ENCODE measurements at regions of chr2 and their contacts with region 1.

Region 1: DNA sequence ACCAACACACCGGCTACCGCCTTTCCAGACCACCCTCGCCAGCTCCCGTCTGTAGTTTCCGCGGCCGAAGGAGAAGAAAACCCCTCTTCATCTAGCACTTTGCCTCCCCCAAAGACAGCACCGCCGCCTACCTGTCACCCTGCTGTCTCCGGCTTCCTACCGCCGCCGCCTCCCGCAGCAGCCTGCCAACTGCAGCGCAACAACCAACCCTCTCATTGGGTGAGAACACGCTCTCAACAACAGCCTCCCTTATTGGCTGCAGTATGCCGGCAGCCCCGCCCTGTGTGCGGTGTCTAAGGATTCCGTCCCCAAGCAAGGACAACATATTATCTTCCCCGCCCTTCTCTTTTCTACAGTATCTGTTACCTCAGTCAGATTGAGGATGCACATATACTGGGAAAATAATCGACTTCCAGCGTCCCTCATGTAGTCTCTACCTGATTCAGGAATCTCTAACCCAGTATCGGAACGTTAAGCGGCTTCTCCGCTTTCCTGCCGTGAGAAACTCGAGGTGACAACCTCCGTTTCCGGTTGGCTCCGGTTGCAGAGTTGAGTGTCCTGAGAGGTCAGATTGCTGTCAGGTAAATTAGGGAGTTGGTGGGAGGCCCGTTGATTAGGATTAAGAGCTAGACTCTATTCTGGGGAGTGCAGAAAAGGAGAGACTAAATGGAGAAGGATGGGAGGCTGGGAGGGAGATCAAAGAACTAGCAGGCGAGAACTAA is at the starts of genes HYCC2 and NDUFB3:
- DNase-seq: peak; percentile 97
- H3K4me3 ChIP-seq: peak within 1 kb of the TSS; percentile 88 to 98
- H3K27ac ChIP-seq: peak within 1 kb of the TSS; percentile 86 to 95
- H3K4me1 ChIP-seq: peaks cover 7 to 12% of the 10 kb centered on the region in 2 experiments; a peak in 3 of 4 replicates
- H3K27me3 ChIP-seq: no peaks in the 10 kb centered on the region
- CTCF ChIP-seq: peak; percentile 34
- EP300 ChIP-seq: no peak
- RAD21 ChIP-seq: peak; percentile 29; the same call in 1 of the 2 replicates
- polyA plus RNA-seq, gene HYCC2: 1.2 and 1.8 TPM in 2 replicates
- polyA plus RNA-seq, gene NDUFB3: 55.9 and 73.7 TPM in 2 replicates

Region 2: DNA sequence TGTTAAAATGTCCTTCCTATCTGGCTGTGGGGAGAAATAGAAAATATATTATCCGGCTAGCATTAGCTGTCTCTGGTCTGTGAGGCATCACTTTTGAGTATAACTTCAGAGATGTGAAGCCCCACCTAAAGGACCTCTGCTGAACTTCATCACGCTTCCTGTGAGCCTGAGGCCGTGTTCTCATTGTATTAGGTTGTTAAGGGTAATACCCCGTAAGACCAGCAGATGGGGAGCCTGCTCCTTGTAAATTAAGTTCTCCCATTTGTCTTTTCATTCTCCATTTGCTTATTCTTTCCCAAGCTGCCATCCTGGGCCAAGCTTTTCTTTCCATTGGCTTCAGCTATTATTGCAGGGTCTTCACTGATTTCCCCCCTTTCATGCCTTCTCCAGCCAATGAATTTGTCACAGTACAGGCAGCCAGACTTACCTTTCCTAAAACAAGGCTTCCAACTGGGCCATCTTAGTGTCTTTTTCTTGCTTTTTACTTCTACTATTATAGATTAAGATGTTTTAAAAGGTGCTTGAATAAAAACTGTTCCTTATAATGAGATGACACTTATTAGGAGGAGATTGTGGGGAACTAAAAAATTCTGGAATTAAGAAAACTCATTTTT is 170.1 kb before region 1 on chr2:
- CTCF ChIA-PET with region 1: interaction called, 58 read pairs
- POLR2A ChIA-PET with region 1: no interaction called
- DNase-seq: peak; percentile 79
- H3K4me3 ChIP-seq: no peak overlapping the region
- H3K27ac ChIP-seq: peak overlapping the region; percentile 45 to 62; a peak in 3 of 4 replicates
- H3K4me1 ChIP-seq: no peaks in the 10 kb centered on the region; a peak in 1 of 4 replicates
- H3K27me3 ChIP-seq: no peaks in the 10 kb centered on the region
- CTCF ChIP-seq: peak; percentile 80
- EP300 ChIP-seq: no peak
- RAD21 ChIP-seq: peak; percentile 82

Region 3: GRCh38 chr2:200950378-200950777 is 121.3 kb before region 1 on chr2:
- CTCF ChIA-PET with region 1: interaction called, 14 read pairs
- POLR2A ChIA-PET with region 1: no interaction called
- DNase-seq: no peak
- H3K4me3 ChIP-seq: no peak overlapping the region
- H3K27ac ChIP-seq: no peak overlapping the region
- H3K4me1 ChIP-seq: no peaks in the 10 kb centered on the region
- H3K27me3 ChIP-seq: no peaks in the 10 kb centered on the region
- CTCF ChIP-seq: no peak
- EP300 ChIP-seq: no peak
- RAD21 ChIP-seq: no peak

Region 4: DNA sequence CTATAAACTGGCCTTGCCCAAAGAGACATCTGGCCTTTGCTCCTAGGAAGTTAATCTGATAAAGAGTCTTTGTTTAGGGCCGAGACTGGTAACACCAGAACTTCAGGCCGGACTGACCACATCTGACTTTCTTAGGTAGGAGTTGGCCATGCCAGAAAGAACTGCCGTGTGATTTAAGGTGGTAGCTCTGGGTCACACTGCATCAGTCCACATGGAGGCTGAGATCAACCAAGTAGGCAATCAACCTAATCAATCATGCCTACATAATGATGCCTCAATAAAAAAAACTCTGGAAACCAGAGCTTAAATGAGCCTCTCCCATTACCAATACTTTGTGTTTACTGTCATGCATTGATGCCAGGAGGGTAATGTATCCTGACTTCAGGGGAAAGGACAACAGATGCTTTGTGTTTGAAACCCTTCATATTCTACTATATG is 64.1 kb before region 1 on chr2:
- CTCF ChIA-PET with region 1: interaction called, 12 read pairs
- POLR2A ChIA-PET with region 1: no interaction called
- DNase-seq: no peak
- H3K4me3 ChIP-seq: no peak overlapping the region
- H3K27ac ChIP-seq: no peak overlapping the region
- H3K4me1 ChIP-seq: peaks cover 0 to 5% of the 10 kb centered on the region in 2 experiments; a peak in 1 of 4 replicates
- H3K27me3 ChIP-seq: no peaks in the 10 kb centered on the region
- CTCF ChIP-seq: no peak
- EP300 ChIP-seq: no peak
- RAD21 ChIP-seq: no peak

Region 5: GRCh38 chr2:201158111-201158929 is 86.7 kb after region 1 on chr2:
- CTCF ChIA-PET with region 1: interaction called, 30 read pairs
- POLR2A ChIA-PET with region 1: interaction called, 3 read pairs
- DNase-seq: peak; percentile 76
- H3K4me3 ChIP-seq: no peak overlapping the region; a peak in 1 of 4 replicates
- H3K27ac ChIP-seq: peak overlapping the region; percentile 60 to 71
- H3K4me1 ChIP-seq: peaks cover 5% of the 10 kb centered on the region in 2 experiments; a peak in 2 of 4 replicates
- H3K27me3 ChIP-seq: no peaks in the 10 kb centered on the region
- CTCF ChIP-seq: peak; percentile 84
- EP300 ChIP-seq: no peak
- RAD21 ChIP-seq: peak; percentile 91

Measured in SK-N-SH (cell line).